ENCODE measurements at regions of chr11 and their contacts with region 1.

Region 1: DNA sequence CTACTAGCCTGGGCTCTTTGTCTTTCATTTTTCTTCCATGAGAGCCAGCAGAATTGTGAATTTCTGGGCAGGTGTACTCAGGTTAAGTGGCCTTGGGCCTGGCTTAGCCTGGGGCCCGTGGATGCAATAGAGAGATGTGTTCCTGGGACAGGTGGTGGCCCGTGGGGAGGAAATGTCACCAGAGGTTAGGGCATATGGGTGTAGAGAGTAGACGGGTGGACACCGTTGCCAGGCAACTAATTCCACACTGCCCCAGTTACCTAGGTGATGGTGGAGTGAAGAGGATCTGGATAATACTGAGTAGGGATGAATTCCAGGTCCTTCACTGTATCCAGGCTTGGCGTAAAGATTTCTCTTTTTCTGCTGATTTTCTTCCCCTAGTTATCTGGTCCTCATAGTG is 175.0 kb downstream of the INSC start:
- DNase-seq: no peak
- H3K4me3 ChIP-seq: no peak overlapping the region
- H3K27ac ChIP-seq: no peak overlapping the region
- H3K4me1 ChIP-seq: no peaks in the 10 kb centered on the region
- H3K27me3 ChIP-seq: no peaks in the 10 kb centered on the region
- CTCF ChIP-seq: no peak

Region 2: GRCh38 chr11:14914541-14914940 is 375.2 kb before region 1 on chr11:
- CTCF ChIA-PET with region 1: no interaction called
- dilution Hi-C with region 1: no loop called
- in situ Hi-C with region 1: no loop called
- intact Hi-C with region 1: no loop called
- DNase-seq: no peak
- H3K4me3 ChIP-seq: no peak overlapping the region
- H3K27ac ChIP-seq: no peak overlapping the region
- H3K4me1 ChIP-seq: no peaks in the 10 kb centered on the region
- H3K27me3 ChIP-seq: peaks cover 2% of the 10 kb centered on the region
- CTCF ChIP-seq: no peak

Region 3: GRCh38 chr11:15169815-15170551 is 119.7 kb before region 1 on chr11:
- CTCF ChIA-PET with region 1: no interaction called
- dilution Hi-C with region 1: no loop called
- in situ Hi-C with region 1: no loop called
- intact Hi-C with region 1: no loop called
- DNase-seq: peak; percentile 30
- H3K4me3 ChIP-seq: no peak overlapping the region
- H3K27ac ChIP-seq: no peak overlapping the region
- H3K4me1 ChIP-seq: no peaks in the 10 kb centered on the region
- H3K27me3 ChIP-seq: no peaks in the 10 kb centered on the region
- CTCF ChIP-seq: no peak

Region 4: GRCh38 chr11:15248749-15249148 is 41.0 kb before region 1 on chr11:
- CTCF ChIA-PET with region 1: no interaction called
- dilution Hi-C with region 1: loop called (anchors 5 kb)
- in situ Hi-C with region 1: no loop called
- intact Hi-C with region 1: no loop called
- DNase-seq: no peak
- H3K4me3 ChIP-seq: no peak overlapping the region
- H3K27ac ChIP-seq: no peak overlapping the region
- H3K4me1 ChIP-seq: no peaks in the 10 kb centered on the region
- H3K27me3 ChIP-seq: no peaks in the 10 kb centered on the region
- CTCF ChIP-seq: no peak

Region 5: GRCh38 chr11:15333407-15333806 is 43.7 kb after region 1 on chr11:
- CTCF ChIA-PET with region 1: no interaction called
- dilution Hi-C with region 1: loop called (anchors 5 kb)
- in situ Hi-C with region 1: no loop called
- intact Hi-C with region 1: no loop called
- DNase-seq: no peak
- H3K4me3 ChIP-seq: no peak overlapping the region
- H3K27ac ChIP-seq: no peak overlapping the region
- H3K4me1 ChIP-seq: no peaks in the 10 kb centered on the region
- H3K27me3 ChIP-seq: no peaks in the 10 kb centered on the region
- CTCF ChIP-seq: no peak

Measured in mammary epithelial cell (primary cell).